Endothelial cell of umbilical vein (primary cell): ENCODE measurements at regions of chr12 and their contacts with region 1.

Region 1: DNA sequence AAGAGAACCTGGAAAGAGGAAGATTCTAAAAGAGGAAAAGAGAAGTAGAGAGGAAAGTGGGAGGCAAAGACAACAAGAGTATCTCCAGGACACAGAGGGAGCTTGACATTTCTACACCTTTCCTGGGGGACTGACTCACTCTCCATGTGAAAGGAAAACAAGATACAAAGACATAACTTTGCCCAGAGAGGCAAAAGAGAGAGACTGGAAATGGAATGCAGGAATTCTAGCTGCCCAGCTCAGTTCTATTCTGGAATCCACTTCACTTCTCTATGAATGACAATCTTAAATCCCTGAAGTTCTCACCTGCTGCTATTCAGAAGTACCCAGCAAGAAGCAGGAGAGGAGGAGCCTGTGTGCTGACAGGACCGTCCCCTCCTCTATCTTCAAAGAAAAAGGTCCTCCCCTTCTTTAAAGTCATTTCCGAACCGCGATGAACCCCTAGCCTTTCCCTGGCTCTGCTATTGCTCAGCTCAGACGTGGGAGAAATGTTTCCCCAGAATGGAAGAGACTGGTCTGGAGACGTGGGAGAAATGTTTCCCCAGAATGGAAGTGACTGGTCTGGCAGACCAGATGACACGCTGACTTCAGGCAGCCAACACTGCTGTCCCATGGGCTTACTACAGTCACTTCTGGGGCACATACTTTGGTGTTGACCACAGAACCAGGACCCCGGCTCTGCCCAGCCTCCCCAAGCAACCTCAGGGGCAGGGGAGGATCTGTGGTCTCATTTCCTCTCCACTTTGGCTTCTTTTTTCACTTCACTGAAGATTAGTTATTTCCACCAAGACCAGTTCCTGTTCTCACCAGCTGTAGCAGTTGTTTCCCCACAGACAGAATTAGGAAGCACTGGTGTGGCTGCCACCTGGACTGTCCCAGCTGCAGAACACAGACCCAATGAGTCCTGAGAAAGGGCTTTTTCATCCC is 8.3 kb downstream of the FMNL3 start:
- DNase-seq: peak; percentile 83
- H3K4me3 ChIP-seq: peak overlapping the region in 1 of 3 experiments; percentile 41
- H3K27ac ChIP-seq: peak overlapping the region; percentile 81
- H3K4me1 ChIP-seq: peaks cover 34% of the 10 kb centered on the region
- H3K27me3 ChIP-seq: no peaks in the 10 kb centered on the region
- CTCF ChIP-seq: no peak
- POLR2A ChIP-seq: no peak

Region 2: GRCh38 chr12:49662998-49663843 is 35.7 kb before region 1 on chr12:
- CTCF ChIA-PET with region 1: interaction called, 43 read pairs
- POLR2A ChIA-PET with region 1: interaction called, 8 read pairs
- dilution Hi-C with region 1: no loop called
- intact Hi-C with region 1: loop called (anchors 1 kb)
- DNase-seq: peak; percentile 95
- H3K4me3 ChIP-seq: peak overlapping the region in 1 of 3 experiments; percentile 12
- H3K27ac ChIP-seq: peak overlapping the region; percentile 100
- H3K4me1 ChIP-seq: peaks cover 48% of the 10 kb centered on the region
- H3K27me3 ChIP-seq: no peaks in the 10 kb centered on the region
- CTCF ChIP-seq: no peak
- POLR2A ChIP-seq: no peak

Region 3: DNA sequence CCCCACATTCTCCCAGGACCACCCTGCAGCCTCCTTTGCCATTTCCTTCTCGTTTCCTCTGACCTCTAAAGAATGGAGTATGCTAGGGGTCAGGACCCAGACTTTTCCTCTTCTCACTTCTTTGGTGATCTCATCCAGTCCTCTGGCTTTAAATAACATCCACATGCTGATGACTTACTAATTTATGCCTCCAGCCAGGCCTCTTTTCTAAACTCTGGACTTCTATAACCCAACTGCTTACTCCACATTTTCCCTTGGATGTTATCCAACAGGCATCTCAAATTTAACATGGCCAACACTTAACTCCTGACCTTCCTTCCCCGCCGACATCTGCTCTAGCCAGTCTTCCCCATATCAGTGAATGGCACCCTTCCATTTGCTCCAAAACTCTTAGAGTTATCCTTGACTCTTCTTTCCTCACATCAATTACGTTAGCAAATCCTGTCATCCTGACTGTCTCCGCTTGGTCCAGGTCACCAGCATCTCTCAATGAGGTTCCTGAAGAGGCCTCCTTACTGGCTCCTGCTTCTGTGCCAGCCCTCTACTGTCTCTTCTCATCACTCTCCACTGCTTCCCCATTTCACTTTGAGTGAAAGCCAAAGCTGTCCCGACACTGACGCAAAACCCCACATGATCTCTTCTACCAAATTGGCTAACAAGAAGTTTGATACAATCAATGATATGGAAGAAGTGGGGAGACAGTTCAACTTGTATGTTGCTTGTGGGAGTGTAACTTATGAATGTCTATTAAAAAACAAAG is 85.2 kb after region 1 on chr12:
- CTCF ChIA-PET with region 1: no interaction called
- POLR2A ChIA-PET with region 1: no interaction called
- dilution Hi-C with region 1: no loop called
- intact Hi-C with region 1: no loop called
- DNase-seq: peak; percentile 97
- H3K4me3 ChIP-seq: no peak overlapping the region
- H3K27ac ChIP-seq: peak overlapping the region; percentile 92
- H3K4me1 ChIP-seq: peaks cover 29% of the 10 kb centered on the region
- H3K27me3 ChIP-seq: peaks cover 0 to 2% of the 10 kb centered on the region in 2 experiments
- CTCF ChIP-seq: no peak
- POLR2A ChIP-seq: peak; percentile 89

Region 4: DNA sequence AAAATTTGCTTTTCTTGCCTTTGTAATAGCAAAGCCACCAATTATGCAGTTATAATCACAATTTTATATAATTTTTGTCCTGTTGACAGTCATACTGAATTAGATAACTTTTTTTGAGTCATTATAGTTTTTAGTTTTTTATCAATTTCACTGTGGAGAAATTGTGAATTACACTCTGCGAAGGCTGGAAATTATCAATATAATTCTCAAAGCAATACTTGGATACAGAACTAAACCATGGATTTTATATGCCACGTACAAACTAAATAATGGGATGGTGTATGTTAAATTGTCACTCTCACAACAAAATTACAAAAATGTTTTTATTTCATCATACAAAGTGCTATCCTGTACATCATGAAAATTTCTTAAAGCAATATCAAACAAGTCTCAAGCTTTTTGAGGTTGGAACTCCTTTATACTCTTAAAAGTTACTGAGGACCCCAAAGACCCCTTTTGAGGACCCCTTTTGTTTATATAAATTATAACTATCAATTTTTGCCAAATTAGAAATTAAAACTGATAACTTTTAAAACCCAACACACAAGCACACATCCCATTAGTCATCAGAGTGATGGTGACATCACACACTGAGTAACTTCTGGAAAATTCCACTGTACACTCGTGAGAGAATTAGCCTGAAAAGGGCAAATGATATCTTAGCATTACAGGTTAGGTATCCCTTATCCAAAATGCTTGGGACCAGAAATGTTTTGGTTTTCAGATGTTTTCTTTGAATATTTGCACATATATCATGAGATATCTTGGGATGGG is 231.8 kb after region 1 on chr12:
- CTCF ChIA-PET with region 1: no interaction called
- POLR2A ChIA-PET with region 1: no interaction called
- dilution Hi-C with region 1: no loop called
- intact Hi-C with region 1: no loop called
- DNase-seq: peak; percentile 53
- H3K4me3 ChIP-seq: no peak overlapping the region
- H3K27ac ChIP-seq: no peak overlapping the region
- H3K4me1 ChIP-seq: no peaks in the 10 kb centered on the region
- H3K27me3 ChIP-seq: no peaks in the 10 kb centered on the region
- CTCF ChIP-seq: no peak
- POLR2A ChIP-seq: no peak

Region 5: DNA sequence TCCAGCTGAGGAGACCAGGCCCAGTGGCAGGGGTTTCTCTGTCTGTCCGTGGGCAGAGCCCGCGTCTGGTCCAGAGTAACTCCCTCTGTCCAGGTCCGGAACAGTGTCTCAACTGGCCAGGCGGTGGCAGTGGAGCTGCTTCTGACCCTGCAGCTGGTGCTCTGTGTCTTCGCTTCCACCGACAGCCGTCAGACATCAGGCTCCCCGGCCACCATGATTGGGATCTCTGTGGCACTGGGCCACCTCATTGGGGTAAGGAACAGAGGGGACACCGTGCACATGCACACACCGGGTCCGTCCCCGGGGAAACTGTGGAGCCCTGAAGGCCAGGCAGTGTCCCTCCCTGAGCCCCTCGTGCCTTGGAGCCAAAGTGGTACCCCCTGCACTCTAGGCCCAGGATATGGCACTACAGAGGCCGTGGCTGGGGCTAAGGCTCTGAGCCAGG is 275.4 kb after region 1 on chr12:
- CTCF ChIA-PET with region 1: no interaction called
- POLR2A ChIA-PET with region 1: no interaction called
- dilution Hi-C with region 1: no loop called
- intact Hi-C with region 1: no loop called
- DNase-seq: peak; percentile 47
- H3K4me3 ChIP-seq: no peak overlapping the region
- H3K27ac ChIP-seq: no peak overlapping the region
- H3K4me1 ChIP-seq: no peaks in the 10 kb centered on the region
- H3K27me3 ChIP-seq: peaks cover 7 to 9% of the 10 kb centered on the region in 2 experiments
- CTCF ChIP-seq: peak; percentile 53 to 80
- POLR2A ChIP-seq: no peak